CD8-positive, alpha-beta memory T cell (primary cell): ENCODE measurements at regions of chr9 and their contacts with region 1.

Region 1: GRCh38 chr9:35646533-35647265 is 4.0 kb downstream of the SIT1 start:
- DNase-seq: peak; percentile 87 to 93 (median 90)
- H3K4me3 ChIP-seq: peak overlapping the region; percentile 93
- H3K4me3 Mint-ChIP-seq: peak overlapping the region; percentile 91 to 98 (median 94)
- H3K27ac ChIP-seq: peak overlapping the region; percentile 85
- H3K27ac Mint-ChIP-seq: peak overlapping the region; percentile 87 to 99 (median 98)
- H3K4me1 ChIP-seq: peaks cover 54% of the 10 kb centered on the region
- H3K4me1 Mint-ChIP-seq: peaks cover 58 to 75% (median 67%) of the 10 kb centered on the region in 3 donors
- H3K27me3 ChIP-seq: no peaks in the 10 kb centered on the region
- H3K27me3 Mint-ChIP-seq: no peaks in the 10 kb centered on the region

Region 2: DNA sequence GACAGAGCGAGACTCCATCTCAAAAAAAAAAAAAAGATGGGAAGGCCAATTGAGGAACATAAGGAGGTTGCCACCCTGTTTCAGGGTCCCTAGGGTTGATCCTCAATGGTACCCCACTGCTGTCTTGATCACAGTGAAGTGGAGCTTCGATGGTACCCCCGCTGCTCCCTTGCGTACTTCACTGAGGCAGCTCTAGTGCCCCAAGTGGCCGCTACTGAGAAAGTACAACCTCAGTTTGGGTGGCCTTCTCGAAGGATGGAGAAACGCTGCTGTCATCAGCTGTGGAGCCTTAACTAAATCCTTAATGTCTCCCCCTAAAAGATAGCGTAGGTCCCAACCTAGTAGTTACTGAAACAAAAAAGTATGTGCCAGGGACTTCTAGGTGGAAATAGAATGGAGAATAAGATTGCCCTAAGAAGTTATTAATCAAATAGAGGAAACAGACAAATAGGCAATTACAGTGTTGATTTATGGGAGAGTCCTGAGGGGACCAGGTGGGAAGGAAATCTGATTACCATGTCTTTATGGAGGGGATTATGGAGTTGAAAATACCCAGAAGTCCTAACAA is 35.4 kb before region 1 on chr9:
- CTCF ChIA-PET with region 1: interaction called, 200 read pairs
- POLR2A ChIA-PET with region 1: interaction called, 17 read pairs
- DNase-seq: peak; percentile 37 to 68 (median 44)
- H3K4me3 ChIP-seq: no peak overlapping the region
- H3K4me3 Mint-ChIP-seq: peak overlapping the region in 2 of 7 donors; percentile 61 to 67
- H3K27ac ChIP-seq: no peak overlapping the region
- H3K27ac Mint-ChIP-seq: peak overlapping the region; percentile 3 to 84 (median 66)
- H3K4me1 ChIP-seq: peaks cover 11% of the 10 kb centered on the region
- H3K4me1 Mint-ChIP-seq: peaks cover 21 to 26% (median 26%) of the 10 kb centered on the region in 3 donors
- H3K27me3 ChIP-seq: no peaks in the 10 kb centered on the region
- H3K27me3 Mint-ChIP-seq: peaks cover 0 to 1% of the 10 kb centered on the region in 2 donors

Region 3: GRCh38 chr9:35636135-35636876 is 10.4 kb before region 1 on chr9:
- CTCF ChIA-PET with region 1: interaction called, 12 read pairs
- POLR2A ChIA-PET with region 1: interaction called, 3 read pairs
- DNase-seq: no peak
- H3K4me3 ChIP-seq: no peak overlapping the region
- H3K4me3 Mint-ChIP-seq: peak overlapping the region; percentile 3 to 69 (median 36)
- H3K27ac ChIP-seq: no peak overlapping the region
- H3K27ac Mint-ChIP-seq: peak overlapping the region; percentile 79 to 97 (median 91)
- H3K4me1 ChIP-seq: peaks cover 33% of the 10 kb centered on the region
- H3K4me1 Mint-ChIP-seq: peaks cover 50 to 64% (median 55%) of the 10 kb centered on the region in 3 donors
- H3K27me3 ChIP-seq: no peaks in the 10 kb centered on the region
- H3K27me3 Mint-ChIP-seq: no peaks in the 10 kb centered on the region

Region 4: GRCh38 chr9:35664531-35665470 is 18.1 kb after region 1 on chr9 and contains the start of gene ARHGEF39:
- CTCF ChIA-PET with region 1: interaction called, 162 read pairs
- POLR2A ChIA-PET with region 1: interaction called, 4 read pairs
- DNase-seq: peak; percentile 60 to 79 (median 71)
- H3K4me3 ChIP-seq: peak within 1 kb of the TSS; percentile 84
- H3K4me3 Mint-ChIP-seq: peak within 1 kb of the TSS; percentile 87 to 91 (median 89)
- H3K27ac ChIP-seq: peak within 1 kb of the TSS; percentile 39
- H3K27ac Mint-ChIP-seq: peak within 1 kb of the TSS; percentile 73 to 100 (median 97)
- H3K4me1 ChIP-seq: peaks cover 52% of the 10 kb centered on the region
- H3K4me1 Mint-ChIP-seq: peaks cover 53 to 68% (median 64%) of the 10 kb centered on the region in 3 donors
- H3K27me3 ChIP-seq: no peaks in the 10 kb centered on the region
- H3K27me3 Mint-ChIP-seq: peaks cover 0 to 2% of the 10 kb centered on the region in 2 donors
- total RNA-seq, gene ARHGEF39: 7.7 to 10.7 TPM

Region 5: DNA sequence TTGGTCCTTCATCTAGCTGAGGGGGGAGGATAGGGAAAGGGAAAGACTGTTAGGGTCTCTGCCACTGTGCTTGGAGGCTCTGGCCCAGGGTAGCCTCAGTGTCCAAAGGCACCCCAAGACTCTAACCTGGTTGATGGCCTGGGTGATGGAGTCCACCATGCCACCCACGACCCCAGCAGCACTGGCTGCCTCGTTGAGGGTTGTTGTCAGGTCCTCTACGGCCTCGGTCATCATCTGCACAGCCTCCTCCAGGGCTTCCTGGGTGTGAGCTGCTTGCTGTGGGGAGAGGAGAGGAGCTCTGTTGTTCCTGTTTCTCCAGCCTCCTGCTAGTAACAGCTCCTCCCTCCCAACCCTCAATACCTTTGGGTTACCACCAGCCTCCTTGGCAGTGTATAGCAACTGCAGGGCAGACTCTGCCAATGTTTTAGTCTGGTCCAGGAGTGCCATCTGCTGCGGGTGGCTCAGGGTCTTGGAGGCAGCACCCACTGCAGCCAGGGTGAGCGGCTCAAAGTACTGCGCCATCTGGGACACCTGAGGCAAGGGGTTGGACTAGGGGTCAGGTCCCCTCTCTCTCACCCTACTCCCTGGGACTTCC is 59.2 kb after region 1 on chr9:
- CTCF ChIA-PET with region 1: interaction called, 12 read pairs
- POLR2A ChIA-PET with region 1: no interaction called
- DNase-seq: no peak
- H3K4me3 ChIP-seq: no peak overlapping the region
- H3K4me3 Mint-ChIP-seq: no peak overlapping the region
- H3K27ac ChIP-seq: no peak overlapping the region
- H3K27ac Mint-ChIP-seq: peak overlapping the region in 1 of 8 donors; percentile 71
- H3K4me1 ChIP-seq: no peaks in the 10 kb centered on the region
- H3K4me1 Mint-ChIP-seq: peaks cover 0 to 4% (median 1%) of the 10 kb centered on the region in 3 donors
- H3K27me3 ChIP-seq: no peaks in the 10 kb centered on the region
- H3K27me3 Mint-ChIP-seq: peaks cover 0 to 2% of the 10 kb centered on the region in 2 donors

Region 6: GRCh38 chr9:35756275-35757225 is 109.9 kb after region 1 on chr9:
- CTCF ChIA-PET with region 1: interaction called, 13 read pairs
- POLR2A ChIA-PET with region 1: no interaction called
- DNase-seq: peak; percentile 65 to 86 (median 67)
- H3K4me3 ChIP-seq: peak overlapping the region; percentile 92
- H3K4me3 Mint-ChIP-seq: peak overlapping the region; percentile 92 to 100 (median 96)
- H3K27ac ChIP-seq: peak overlapping the region; percentile 76
- H3K27ac Mint-ChIP-seq: peak overlapping the region; percentile 92 to 99 (median 96)
- H3K4me1 ChIP-seq: peaks cover 25% of the 10 kb centered on the region
- H3K4me1 Mint-ChIP-seq: peaks cover 43 to 63% (median 51%) of the 10 kb centered on the region in 3 donors
- H3K27me3 ChIP-seq: no peaks in the 10 kb centered on the region
- H3K27me3 Mint-ChIP-seq: no peaks in the 10 kb centered on the region

Region 7: DNA sequence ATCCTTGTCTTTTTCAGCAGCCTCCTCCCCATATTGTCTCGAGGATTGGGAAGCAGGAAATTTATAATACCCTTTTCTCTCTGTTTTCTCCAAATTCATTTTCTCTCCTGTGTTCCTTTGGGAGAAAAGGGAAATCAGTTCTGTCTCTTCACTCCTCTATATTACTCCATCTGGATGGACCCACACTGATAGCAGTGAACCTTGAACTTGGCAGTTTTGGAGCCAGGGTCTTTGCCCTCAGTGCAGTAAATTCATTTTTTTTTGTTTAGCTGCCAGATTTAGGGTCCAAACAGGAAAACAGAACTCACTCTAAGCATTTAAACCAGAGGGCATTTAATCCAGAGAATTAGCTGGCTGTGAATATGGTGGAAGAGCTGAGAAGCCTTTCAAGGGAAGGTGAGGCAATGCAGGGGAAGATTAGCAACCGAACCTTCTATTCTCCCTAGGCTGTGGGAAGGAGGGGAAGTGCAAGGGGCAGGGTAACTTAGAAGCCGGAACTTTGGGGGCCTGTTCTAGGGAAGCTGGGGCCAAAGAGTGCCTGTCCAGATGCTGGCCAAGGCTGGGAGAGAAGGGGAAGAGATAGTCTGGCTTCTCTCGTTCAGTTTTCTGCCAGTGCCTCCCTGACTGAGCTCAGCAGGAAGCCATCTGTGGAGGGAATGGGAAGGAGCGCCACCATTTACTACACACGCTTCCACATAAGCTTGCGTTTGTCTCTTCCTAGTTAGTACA is 128.4 kb after region 1 on chr9:
- CTCF ChIA-PET with region 1: no interaction called
- POLR2A ChIA-PET with region 1: no interaction called
- DNase-seq: no peak
- H3K4me3 ChIP-seq: no peak overlapping the region
- H3K4me3 Mint-ChIP-seq: no peak overlapping the region
- H3K27ac ChIP-seq: no peak overlapping the region
- H3K27ac Mint-ChIP-seq: peak overlapping the region in 2 of 8 donors; percentile 58 to 61
- H3K4me1 ChIP-seq: no peaks in the 10 kb centered on the region
- H3K4me1 Mint-ChIP-seq: peaks cover 0 to 7% (median 2%) of the 10 kb centered on the region in 3 donors
- H3K27me3 ChIP-seq: no peaks in the 10 kb centered on the region
- H3K27me3 Mint-ChIP-seq: no peaks in the 10 kb centered on the region